GM10248 (cell line): ENCODE measurements at regions of chr18 and their contacts with region 1.

Region 1: DNA sequence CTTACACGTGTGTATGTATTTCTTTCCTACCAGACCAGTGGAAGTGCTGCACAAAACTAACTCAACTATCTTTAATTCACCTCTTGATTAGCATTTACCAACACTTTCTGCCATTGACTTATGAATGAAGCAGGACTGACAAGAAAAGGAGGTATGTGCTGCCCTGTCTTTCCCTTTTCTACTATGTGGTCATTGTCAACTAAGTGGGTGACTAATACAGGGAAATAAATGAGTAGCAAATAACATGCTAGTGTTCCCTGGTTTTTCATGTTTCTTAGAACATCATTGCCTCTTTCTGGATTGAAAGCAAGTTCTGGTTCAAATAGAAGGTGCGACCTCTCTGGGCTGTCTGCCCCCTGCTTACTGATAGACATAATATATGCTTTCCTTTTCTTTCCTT is 58.0 kb downstream of the LINC00305 start:
- DNase-seq: no peak
- CTCF ChIP-seq: no peak

Region 2: DNA sequence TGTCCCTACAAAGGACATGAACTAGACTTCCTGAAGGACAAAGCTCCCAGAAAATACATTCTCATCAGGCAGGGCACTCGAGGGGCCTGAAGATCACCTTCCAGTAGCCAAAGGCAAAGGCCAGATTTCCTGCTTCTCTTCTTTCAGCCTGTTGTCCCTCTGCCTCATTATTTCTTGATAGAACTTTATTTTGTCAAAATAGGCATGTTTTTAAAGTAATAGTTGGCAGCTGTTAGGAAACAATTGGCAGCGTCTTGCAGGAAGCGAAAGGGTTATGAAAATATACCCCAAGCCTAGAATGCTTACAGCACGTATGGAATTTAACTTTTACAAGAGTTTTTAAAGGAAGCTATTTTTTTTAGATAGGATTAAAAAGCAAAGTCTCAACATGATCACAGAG is 16.9 kb before region 1 on chr18:
- CTCF ChIA-PET with region 1: interaction called, 12 read pairs
- POLR2A ChIA-PET with region 1: no interaction called
- DNase-seq: no peak
- CTCF ChIP-seq: no peak